ENCODE measurements at regions of chr3 and their contacts with region 1.

Region 1: GRCh38 chr3:9932843-9933560 is 632 bp upstream of the CRELD1 start:
- H3K4me3 ChIP-seq: peak overlapping the region; percentile 31
- H3K27ac ChIP-seq: peak overlapping the region; percentile 95
- H3K4me1 ChIP-seq: 0 out of 2 replicates have a peak, but pooled peaks cover 2% of the 10 kb centered on the region
- CTCF ChIP-seq: peak; percentile 97

Region 2: GRCh38 chr3:9843715-9844438 is 89.1 kb before region 1 on chr3 and contains the start of gene RPUSD3:
- CTCF ChIA-PET with region 1: interaction called, 14 read pairs
- POLR2A ChIA-PET with region 1: interaction called, 7 read pairs
- H3K4me3 ChIP-seq: peak within 1 kb of the TSS; percentile 77
- H3K27ac ChIP-seq: peak within 1 kb of the TSS; percentile 72; the same call in 1 of the 2 replicates
- H3K4me1 ChIP-seq: no peaks in the 10 kb centered on the region
- CTCF ChIP-seq: no peak

Region 3: DNA sequence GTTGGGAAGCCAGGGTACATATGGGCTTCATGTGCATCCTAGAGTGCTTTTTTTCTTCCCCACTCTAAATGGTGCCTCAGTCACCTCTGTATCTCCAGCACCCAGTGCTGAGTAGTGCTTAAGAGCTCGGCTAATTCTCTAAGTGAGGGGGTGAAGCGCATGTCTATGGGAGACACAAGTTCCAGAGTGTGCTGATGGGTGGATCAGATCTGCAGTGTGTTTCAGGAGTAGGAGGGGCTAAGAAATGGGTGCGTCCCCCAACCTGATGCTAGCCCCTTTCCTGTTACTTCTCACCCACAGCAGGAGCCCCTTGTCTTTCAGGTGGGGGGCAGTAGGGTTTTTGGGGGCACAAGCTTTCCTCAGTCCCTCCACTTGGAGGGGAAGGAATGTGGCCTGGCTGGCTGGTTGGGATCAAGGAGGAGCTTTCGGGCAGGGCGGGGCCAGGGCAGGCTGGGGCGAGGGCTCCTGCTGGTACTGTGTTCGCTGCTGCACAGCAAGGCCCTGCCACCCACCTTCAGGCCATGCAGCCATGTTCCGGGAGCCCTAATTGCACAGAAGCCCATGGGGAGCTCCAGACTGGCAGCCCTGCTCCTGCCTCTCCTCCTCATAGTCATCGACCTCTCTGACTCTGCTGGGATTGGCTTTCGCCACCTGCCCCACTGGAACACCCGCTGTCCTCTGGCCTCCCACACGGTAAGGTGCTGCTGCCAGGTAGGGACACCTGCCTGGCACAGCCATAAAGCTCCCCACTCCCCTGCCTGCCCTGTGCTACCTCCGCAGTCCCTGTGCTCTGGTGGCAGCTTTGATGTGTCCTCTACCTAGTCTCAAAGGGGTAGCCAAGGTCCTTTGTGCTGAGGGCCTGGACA is 30.4 kb before region 1 on chr3 and contains the start of gene IL17RE:
- CTCF ChIA-PET with region 1: interaction called, 5 read pairs
- POLR2A ChIA-PET with region 1: interaction called, 10 read pairs
- H3K4me3 ChIP-seq: peak within 1 kb of the TSS; percentile 11
- H3K27ac ChIP-seq: no peak within 1 kb of the TSS
- H3K4me1 ChIP-seq: no peaks in the 10 kb centered on the region
- CTCF ChIP-seq: no peak

Region 4: GRCh38 chr3:9946112-9947024 is 13.4 kb after region 1 on chr3:
- CTCF ChIA-PET with region 1: interaction called, 19 read pairs
- POLR2A ChIA-PET with region 1: interaction called, 33 read pairs
- H3K4me3 ChIP-seq: peak overlapping the region; percentile 50
- H3K27ac ChIP-seq: peak overlapping the region; percentile 69; the same call in 1 of the 2 replicates
- H3K4me1 ChIP-seq: no peaks in the 10 kb centered on the region
- CTCF ChIP-seq: peak; percentile 51

Region 5: GRCh38 chr3:9976721-9977709 is 44.0 kb after region 1 on chr3:
- CTCF ChIA-PET with region 1: interaction called, 11 read pairs
- POLR2A ChIA-PET with region 1: no interaction called
- H3K4me3 ChIP-seq: no peak overlapping the region
- H3K27ac ChIP-seq: peak overlapping the region; percentile 40; the same call in 1 of the 2 replicates
- H3K4me1 ChIP-seq: 0 out of 2 replicates have a peak, but pooled peaks cover 3% of the 10 kb centered on the region
- CTCF ChIP-seq: no peak

Region 6: GRCh38 chr3:10010486-10011465 is 77.8 kb after region 1 on chr3:
- CTCF ChIA-PET with region 1: no interaction called
- POLR2A ChIA-PET with region 1: interaction called, 10 read pairs
- H3K4me3 ChIP-seq: peak overlapping the region; percentile 53
- H3K27ac ChIP-seq: peak overlapping the region; percentile 16; the same call in 1 of the 2 replicates
- H3K4me1 ChIP-seq: peaks cover 9% of the 10 kb centered on the region; the same call in 1 of the 2 replicates
- CTCF ChIP-seq: no peak